Calu3 (cell line): ENCODE measurements at regions of chr1 and their contacts with region 1.

Region 1: DNA sequence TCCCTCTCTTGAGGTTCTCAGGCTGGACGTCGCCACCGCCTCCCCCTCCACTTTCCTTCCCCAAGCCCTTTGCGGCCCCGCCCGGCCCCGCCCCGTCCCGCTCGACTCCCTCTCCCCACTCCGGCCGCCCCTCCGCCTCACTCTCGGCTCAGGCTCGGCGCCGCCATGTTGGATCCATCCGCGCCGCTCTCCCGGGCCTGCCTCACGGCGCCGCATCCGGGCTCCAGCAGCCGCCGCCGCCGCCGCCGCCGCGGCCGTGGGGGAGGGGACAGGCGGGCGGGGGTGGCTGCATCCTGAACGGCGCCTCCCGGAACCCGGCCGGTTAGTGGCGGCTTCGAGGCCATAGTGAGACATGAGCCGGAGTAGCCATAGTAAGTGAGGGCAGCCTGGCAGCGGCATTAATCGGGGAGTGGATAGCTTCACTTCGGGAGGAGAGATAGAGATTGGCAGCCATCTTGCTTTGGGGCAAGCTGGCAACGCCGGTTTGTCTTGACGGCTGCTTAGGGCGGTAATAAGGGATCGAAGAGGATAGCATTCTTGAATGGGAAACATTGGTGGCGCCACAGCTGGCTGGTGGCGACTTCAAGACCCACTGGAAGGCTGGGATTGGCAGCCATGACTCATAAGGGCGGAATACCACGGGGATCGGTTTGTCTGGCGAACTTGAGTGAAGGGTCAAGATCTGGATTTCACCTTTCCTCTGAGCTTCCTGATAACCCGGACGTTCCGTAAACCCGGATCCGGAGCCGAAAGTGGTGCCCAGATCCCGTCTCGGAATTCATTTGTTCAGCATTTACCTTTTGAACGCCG is at the start of gene DEDD:
- DNase-seq: peak; percentile 94
- H3K4me3 Mint-ChIP-seq: no peak within 1 kb of the TSS
- H3K27ac Mint-ChIP-seq: no peak within 1 kb of the TSS
- H3K4me1 Mint-ChIP-seq: peaks cover 25% of the 10 kb centered on the region
- H3K27me3 Mint-ChIP-seq: no peaks in the 10 kb centered on the region
- CTCF ChIP-seq: no peak
- total RNA-seq, gene DEDD: 40.4 and 45.7 TPM in 2 replicates

Region 2: GRCh38 chr1:161117759-161118581 is 14.6 kb before region 1 on chr1 and contains the starts of genes NIT1 and PFDN2:
- CTCF ChIA-PET with region 1: interaction called, 8 read pairs
- intact Hi-C with region 1: loop called (anchors 2 kb)
- DNase-seq: peak; percentile 91
- H3K4me3 Mint-ChIP-seq: peak within 1 kb of the TSS; percentile 99
- H3K27ac Mint-ChIP-seq: peak within 1 kb of the TSS; percentile 95
- H3K4me1 Mint-ChIP-seq: peaks cover 52% of the 10 kb centered on the region
- H3K27me3 Mint-ChIP-seq: no peaks in the 10 kb centered on the region
- CTCF ChIP-seq: peak; percentile 0
- total RNA-seq, gene NIT1: 49.8 and 52.9 TPM in 2 replicates
- total RNA-seq, gene PFDN2: 121 and 129 TPM in 2 replicates

Region 3: DNA sequence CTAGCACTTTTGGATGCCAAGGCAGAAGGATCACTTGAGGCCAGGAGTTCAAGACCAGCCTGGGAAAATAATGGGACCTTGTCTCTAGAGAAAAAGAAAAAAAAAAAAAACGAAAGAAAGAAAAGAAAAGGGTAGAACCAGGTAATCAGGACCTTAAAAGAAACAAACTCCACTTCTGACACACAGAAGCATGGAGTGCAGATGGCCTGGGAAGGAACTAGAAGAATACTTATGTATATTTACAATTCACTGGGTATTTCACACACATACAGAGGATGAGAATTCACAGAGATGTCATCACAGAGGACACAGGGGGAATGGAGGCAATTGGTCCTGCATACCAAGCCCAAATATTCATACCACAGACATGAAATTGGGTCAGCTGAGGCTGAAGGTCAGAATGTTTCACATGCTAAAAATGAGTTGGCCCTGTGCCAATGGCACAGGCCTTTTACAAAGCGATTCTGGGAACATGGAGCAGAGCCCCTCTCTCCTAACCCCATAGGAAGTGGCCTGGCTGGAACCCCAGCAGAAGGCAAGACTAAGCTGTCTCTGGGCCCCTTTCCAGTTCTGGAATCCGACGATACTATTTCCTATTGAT is 40.3 kb after region 1 on chr1:
- CTCF ChIA-PET with region 1: no interaction called
- intact Hi-C with region 1: no loop called
- DNase-seq: no peak
- H3K4me3 Mint-ChIP-seq: no peak overlapping the region
- H3K27ac Mint-ChIP-seq: no peak overlapping the region
- H3K4me1 Mint-ChIP-seq: peaks cover 18% of the 10 kb centered on the region
- H3K27me3 Mint-ChIP-seq: no peaks in the 10 kb centered on the region
- CTCF ChIP-seq: no peak